ENCODE measurements at regions of chr1 and their contacts with region 1.

Region 1: GRCh38 chr1:52552505-52553361 is at the start of gene TUT4:
- DNase-seq: peak; percentile 52 to 67
- ATAC-seq: peak; percentile 63 to 75
- H3K4me3 ChIP-seq: peak within 1 kb of the TSS; percentile 91 to 100 (median 96)
- H3K27ac ChIP-seq: peak within 1 kb of the TSS; percentile 97 to 99 (median 98)
- H3K4me1 ChIP-seq: peaks cover 34 to 35% of the 10 kb centered on the region in 2 donors
- H3K27me3 ChIP-seq: no peaks in the 10 kb centered on the region
- CTCF ChIP-seq: no peak
- POLR2A ChIP-seq: peak; percentile 51 to 53
- total RNA-seq, gene TUT4: 51.7 to 152 (median 67.5) TPM

Region 2: DNA sequence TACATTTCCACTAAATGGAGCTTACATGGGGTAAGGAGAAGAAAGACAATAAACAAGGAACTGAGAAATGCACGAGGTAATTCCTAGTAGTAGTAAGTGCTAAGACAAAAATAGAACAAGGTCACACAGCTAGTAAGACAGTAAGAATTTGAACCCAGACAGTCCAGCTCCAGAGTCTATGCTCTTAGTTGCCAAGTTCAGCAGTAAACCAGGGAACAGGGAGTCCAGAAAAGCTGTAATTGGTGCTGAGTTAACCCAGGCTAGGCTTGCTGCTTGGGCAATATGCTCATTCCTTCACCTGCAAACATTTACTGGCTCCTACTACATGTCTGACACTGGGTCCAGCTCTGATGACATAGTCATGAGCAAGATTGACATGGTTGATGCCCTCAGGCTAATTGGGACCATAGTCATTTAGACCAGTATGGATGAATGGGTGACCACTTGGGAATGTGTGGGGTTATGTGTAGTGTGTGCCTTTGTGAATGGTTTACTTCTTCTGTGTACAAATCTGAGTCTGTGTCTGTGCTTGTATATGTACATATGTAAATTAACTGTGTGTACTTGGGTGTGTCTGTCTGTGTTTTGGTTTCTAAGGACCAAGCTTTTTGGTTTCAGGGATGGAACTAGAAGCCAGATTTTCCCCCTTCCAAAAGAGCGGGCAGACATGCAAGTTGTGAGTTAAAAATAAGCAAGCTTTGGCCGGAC is 51.5 kb after region 1 on chr1:
- in situ Hi-C with region 1: no loop called
- intact Hi-C with region 1: loop called (anchors 1 kb)
- DNase-seq: peak; percentile 60 to 69
- ATAC-seq: peak; percentile 75 to 83
- H3K4me3 ChIP-seq: peak overlapping the region in 1 of 4 donors; percentile 73
- H3K27ac ChIP-seq: peak overlapping the region; percentile 85 to 96 (median 92)
- H3K4me1 ChIP-seq: peaks cover 27 to 51% of the 10 kb centered on the region in 2 donors
- H3K27me3 ChIP-seq: no peaks in the 10 kb centered on the region
- CTCF ChIP-seq: no peak
- POLR2A ChIP-seq: no peak

Measured in gastrocnemius medialis (tissue), 4 donors.